Activated CD4-positive, alpha-beta memory T cell treated with anti-CD3 and anti-CD28 coated beads, Interleukin-2, amount 10 ng/mL, durations not matched to agents 7 days and 5 days (primary cell): ENCODE measurements at regions of chr17 and their contacts with region 1.

Region 1: DNA sequence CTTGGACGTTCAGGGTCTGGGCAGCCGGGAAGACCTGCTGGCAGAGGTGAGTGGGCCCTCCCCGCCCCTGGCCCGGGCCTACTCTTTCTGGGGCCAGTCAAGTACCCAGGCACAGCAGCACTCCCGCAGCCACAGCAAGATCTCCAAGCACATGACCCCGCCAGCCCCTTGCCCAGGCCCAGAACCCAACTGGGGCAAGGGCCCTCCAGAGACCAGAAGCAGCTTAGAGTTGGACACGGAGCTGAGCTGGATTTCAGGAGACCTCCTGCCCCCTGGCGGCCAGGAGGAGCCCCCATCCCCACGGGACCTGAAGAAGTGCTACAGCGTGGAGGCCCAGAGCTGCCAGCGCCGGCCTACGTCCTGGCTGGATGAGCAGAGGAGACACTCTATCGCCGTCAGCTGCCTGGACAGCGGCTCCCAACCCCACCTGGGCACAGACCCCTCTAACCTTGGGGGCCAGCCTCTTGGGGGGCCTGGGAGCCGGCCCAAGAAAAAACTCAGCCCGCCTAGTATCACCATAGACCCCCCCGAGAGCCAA is 8.6 kb upstream of the ABCC3 start:
- DNase-seq: peak; percentile 67
- H3K4me3 Mint-ChIP-seq: no peak overlapping the region
- H3K27ac Mint-ChIP-seq: no peak overlapping the region
- H3K4me1 Mint-ChIP-seq: peaks cover 2% of the 10 kb centered on the region
- H3K27me3 Mint-ChIP-seq: peaks cover 35% of the 10 kb centered on the region

Region 2: DNA sequence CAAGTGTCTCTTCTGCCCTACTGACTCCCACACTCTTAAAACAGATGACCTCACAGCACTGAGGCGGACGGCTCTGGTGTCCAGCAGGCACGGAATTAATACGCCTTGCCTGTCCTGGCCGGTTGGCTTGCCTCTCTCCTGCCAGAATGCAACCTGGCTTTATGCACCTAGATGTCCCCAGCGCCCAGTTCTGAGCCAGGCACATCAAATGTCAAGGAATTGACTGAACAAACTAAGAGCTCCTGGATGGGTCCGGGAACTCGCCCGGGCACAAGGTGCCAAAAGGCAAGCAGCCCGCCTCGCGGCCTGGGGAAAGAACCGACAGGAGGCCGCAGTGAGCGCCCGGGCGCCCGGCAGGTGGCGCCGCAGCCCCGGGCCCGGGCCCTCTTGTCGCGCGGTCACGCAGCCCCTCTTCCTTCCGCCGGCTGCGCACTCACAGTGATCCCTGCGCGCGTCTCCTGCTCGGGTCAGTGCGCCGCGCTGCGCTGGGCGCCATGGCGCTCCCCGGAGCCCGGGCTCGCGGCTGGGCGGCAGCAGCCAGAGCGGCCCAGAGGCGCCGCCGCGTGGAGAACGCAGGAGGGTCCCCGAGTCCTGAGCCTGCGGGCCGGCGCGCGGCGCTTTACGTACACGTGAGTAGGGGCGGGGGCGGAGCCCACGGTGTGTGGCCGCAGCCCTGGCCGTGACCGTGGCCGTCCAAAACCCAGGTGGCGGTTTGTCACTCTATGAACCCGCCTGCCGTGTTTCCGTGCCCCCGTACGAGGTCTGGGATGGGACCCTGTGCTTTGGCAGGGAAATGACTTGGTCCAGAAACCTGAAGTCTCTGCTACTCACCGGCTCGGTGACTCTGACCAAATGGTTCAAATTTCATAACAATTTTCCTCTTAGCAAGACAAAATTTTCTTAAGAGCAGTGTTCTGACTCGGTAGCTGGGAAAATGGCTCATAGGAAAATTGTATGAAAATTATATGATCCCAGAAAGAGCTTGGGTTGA is 147.4 kb before region 1 on chr17 and contains the start of gene RSAD1:
- CTCF ChIA-PET with region 1: interaction called, 29 read pairs
- POLR2A ChIA-PET with region 1: no interaction called
- DNase-seq: peak; percentile 90
- H3K4me3 Mint-ChIP-seq: peak within 1 kb of the TSS; percentile 82
- H3K27ac Mint-ChIP-seq: peak within 1 kb of the TSS; percentile 68
- H3K4me1 Mint-ChIP-seq: peaks cover 25% of the 10 kb centered on the region
- H3K27me3 Mint-ChIP-seq: peaks cover 3% of the 10 kb centered on the region
- total RNA-seq, gene RSAD1: 24.5 to 28.4 TPM

Region 3: GRCh38 chr17:50547035-50547735 is 78.9 kb before region 1 on chr17 and contains the start of gene SPATA20:
- CTCF ChIA-PET with region 1: interaction called, 10 read pairs
- POLR2A ChIA-PET with region 1: interaction called, 4 read pairs
- DNase-seq: peak; percentile 90
- H3K4me3 Mint-ChIP-seq: peak within 1 kb of the TSS; percentile 73
- H3K27ac Mint-ChIP-seq: peak within 1 kb of the TSS; percentile 44
- H3K4me1 Mint-ChIP-seq: peaks cover 23% of the 10 kb centered on the region
- H3K27me3 Mint-ChIP-seq: peaks cover 19% of the 10 kb centered on the region
- total RNA-seq, gene SPATA20: 14.5 to 17.8 TPM

Region 4: DNA sequence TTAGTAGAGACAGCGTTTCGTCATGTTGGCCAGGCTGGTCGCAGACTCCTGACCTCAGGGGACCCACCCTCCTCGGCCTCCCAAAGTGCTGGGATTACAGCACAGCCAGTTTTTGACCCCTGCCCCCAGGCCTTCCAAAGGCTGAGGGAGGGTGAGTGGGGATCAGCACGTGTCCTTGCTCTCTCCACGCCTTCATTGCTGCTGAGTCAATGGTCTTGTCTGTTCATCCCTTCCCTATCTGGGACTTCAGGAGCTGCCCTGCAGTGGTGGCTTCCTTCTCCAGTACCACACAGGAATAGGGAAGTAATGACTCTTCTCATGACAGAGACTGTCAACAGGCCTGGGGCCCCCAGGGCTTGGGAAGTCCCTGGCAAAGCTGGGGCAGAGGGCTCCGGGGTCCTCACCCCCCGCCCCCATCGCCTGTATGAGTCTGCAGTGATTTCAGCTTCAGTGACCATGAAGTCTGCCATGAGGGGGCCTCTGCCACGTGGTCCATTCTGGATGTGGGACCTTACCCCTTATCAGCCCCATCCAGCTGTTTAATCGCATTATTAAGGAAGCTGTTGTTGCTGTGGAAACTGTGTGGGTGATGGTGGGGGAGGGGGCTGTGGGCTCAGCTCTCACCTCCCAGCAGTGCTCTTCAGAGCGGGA is 14.7 kb after region 1 on chr17:
- CTCF ChIA-PET with region 1: interaction called, 15 read pairs
- POLR2A ChIA-PET with region 1: no interaction called
- DNase-seq: no peak
- H3K4me3 Mint-ChIP-seq: no peak overlapping the region
- H3K27ac Mint-ChIP-seq: no peak overlapping the region
- H3K4me1 Mint-ChIP-seq: no peaks in the 10 kb centered on the region
- H3K27me3 Mint-ChIP-seq: peaks cover 30% of the 10 kb centered on the region

Region 5: GRCh38 chr17:50647187-50647586 is 21.1 kb after region 1 on chr17:
- CTCF ChIA-PET with region 1: interaction called, 15 read pairs
- POLR2A ChIA-PET with region 1: interaction called, 3 read pairs
- DNase-seq: no peak
- H3K4me3 Mint-ChIP-seq: no peak overlapping the region
- H3K27ac Mint-ChIP-seq: no peak overlapping the region
- H3K4me1 Mint-ChIP-seq: no peaks in the 10 kb centered on the region
- H3K27me3 Mint-ChIP-seq: peaks cover 32% of the 10 kb centered on the region

Region 6: DNA sequence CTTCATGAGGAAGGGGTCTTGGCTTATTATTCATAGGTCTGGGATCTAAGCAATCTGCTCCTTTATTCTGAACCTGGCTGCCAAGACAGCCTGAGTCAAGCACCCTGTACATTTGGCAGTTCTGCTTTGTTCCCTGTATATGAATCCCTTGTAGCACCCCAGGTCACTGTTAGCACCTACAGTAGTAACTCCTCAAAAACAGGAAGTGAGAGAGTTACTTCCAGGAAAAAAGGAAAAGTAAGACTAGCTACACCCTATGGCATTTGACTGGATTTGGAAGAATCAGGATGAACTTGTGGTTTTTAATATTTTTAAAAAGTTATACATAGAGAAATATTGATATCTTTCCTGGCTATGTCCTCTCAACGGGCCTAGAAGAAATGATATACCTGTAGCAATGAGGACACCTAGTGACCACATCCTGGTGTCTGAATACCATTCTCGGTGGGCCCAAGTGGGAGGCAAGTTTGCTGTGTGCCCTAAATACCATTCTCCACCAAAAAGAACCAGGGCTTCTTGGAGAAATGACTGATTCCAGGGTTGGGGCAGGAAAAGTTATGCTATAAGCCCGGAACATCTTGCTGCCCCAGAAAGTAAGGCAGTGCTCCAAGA is 71.7 kb after region 1 on chr17:
- CTCF ChIA-PET with region 1: interaction called, 29 read pairs
- POLR2A ChIA-PET with region 1: interaction called, 3 read pairs
- DNase-seq: no peak
- H3K4me3 Mint-ChIP-seq: no peak overlapping the region
- H3K27ac Mint-ChIP-seq: peak overlapping the region; percentile 68
- H3K4me1 Mint-ChIP-seq: peaks cover 37% of the 10 kb centered on the region
- H3K27me3 Mint-ChIP-seq: no peaks in the 10 kb centered on the region

Region 7: GRCh38 chr17:50707289-50708049 is 81.4 kb after region 1 on chr17 and contains the start of gene ANKRD40:
- CTCF ChIA-PET with region 1: interaction called, 16 read pairs
- POLR2A ChIA-PET with region 1: interaction called, 3 read pairs
- DNase-seq: peak; percentile 93
- H3K4me3 Mint-ChIP-seq: peak within 1 kb of the TSS; percentile 83
- H3K27ac Mint-ChIP-seq: peak within 1 kb of the TSS; percentile 96
- H3K4me1 Mint-ChIP-seq: peaks cover 47% of the 10 kb centered on the region
- H3K27me3 Mint-ChIP-seq: peaks cover 2% of the 10 kb centered on the region
- total RNA-seq, gene ANKRD40: 29.8 to 31.1 TPM